ENCODE measurements at regions of chr4 and their contacts with region 1.

Region 1: GRCh38 chr4:7081891-7082471 is 14.1 kb upstream of the GRPEL1 start:
- DNase-seq: peak; percentile 76

Region 2: GRCh38 chr4:7101692-7102515 is 19.9 kb after region 1 on chr4:
- CTCF ChIA-PET with region 1: interaction called, 12 read pairs
- POLR2A ChIA-PET with region 1: interaction called, 3 read pairs
- DNase-seq: peak; percentile 85

Measured in HEK293T (cell line).